ENCODE measurements at regions of chr3 and their contacts with region 1.

Region 1: DNA sequence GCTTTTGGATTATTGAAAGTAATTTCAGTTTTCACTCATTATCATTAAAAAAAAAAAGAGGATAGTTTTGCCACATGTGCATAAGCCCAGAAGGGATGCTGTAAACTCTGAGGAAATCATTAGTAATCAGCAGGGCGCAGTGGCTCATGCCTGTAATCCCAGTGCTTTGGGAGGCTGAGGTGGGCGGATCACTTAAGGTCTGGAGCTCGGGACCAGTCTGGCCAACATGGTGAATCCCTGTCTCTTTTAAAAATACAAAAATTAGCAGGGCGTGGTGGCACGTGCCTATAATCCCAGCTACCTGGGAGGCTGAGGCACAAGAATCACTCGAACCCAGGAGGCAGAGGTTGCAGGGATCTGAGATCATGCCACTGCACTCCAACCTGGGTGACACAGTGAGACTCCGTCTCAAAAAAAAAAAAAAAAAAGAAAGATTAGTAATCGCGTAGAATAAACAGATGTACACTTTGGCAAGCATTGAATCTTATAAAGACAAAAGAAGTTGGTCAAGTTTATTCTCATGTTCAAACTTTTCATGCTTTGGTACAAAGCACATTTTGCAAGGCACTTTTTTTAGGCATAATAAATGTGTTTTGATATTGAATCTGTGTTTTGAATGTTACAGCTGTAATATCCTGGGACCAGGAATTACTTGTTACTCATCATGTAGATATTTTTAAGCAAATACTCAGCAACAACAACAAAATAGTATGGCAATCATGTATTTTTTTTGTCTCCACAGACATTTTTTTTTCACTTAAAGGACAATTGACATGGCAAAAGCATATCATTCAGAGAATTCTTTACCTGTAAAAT is 93.2 kb upstream of the AGTR1 start:
- DNase-seq: no peak
- ATAC-seq: no peak
- H3K4me3 ChIP-seq: no peak overlapping the region
- H3K27ac ChIP-seq: peak overlapping the region; percentile 100
- H3K4me1 ChIP-seq: peaks cover 74% of the 10 kb centered on the region
- H3K27me3 ChIP-seq: no peaks in the 10 kb centered on the region
- CTCF ChIP-seq: no peak
- EP300 ChIP-seq: no peak
- POLR2A ChIP-seq: no peak
- RAD21 ChIP-seq: no peak

Region 2: GRCh38 chr3:148243609-148244008 is 360.9 kb before region 1 on chr3:
- CTCF ChIA-PET with region 1: no interaction called
- POLR2A ChIA-PET with region 1: no interaction called
- in situ Hi-C with region 1: no loop called
- intact Hi-C with region 1: no loop called
- DNase-seq: no peak
- ATAC-seq: no peak
- H3K4me3 ChIP-seq: no peak overlapping the region
- H3K27ac ChIP-seq: no peak overlapping the region
- H3K4me1 ChIP-seq: no peaks in the 10 kb centered on the region
- H3K27me3 ChIP-seq: no peaks in the 10 kb centered on the region
- CTCF ChIP-seq: no peak
- EP300 ChIP-seq: no peak
- POLR2A ChIP-seq: no peak
- RAD21 ChIP-seq: no peak

Region 3: DNA sequence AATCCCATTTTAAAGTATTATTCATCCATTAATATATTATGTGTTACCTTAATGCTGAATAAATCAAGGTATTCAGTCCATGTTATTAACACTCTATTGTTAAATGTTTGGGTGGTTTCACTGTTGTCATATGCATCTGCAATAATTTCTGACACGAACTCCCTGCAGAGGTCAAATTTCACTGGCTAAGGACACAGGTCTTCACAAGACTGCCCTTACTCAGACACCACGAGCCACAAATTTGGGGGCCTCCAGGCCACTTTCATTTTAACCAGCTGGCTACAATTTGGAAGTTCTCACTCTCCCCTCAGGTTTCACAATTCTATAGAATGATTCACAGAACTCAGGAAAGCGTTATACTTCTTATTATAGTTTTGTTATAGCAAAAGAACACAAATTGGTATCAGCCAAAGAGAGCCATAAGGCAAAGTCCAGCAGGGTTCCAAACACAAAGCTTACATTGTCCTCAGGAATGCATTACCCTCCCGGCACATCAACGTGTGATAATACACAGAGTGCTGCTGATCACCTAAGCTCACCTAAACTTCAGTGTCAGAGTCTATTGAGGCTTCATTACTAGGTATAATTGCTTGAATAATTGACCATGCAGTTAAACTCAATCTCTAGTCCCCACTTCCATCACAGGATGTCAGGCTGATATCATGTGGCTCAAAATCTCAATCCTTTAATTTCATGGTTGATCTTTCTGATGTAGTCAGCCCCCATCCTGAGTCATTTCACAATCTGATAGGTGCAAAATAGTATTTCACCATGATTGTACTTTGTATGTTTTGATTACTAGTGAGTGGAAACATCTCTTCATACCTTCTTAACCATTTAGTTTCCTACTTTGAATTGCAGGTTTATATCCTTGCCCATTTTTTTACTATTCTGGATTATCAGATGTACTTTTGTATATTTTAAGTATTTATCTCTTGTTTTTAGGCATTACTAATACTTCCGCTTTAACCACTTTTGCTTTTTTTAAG is 348.2 kb before region 1 on chr3:
- CTCF ChIA-PET with region 1: no interaction called
- POLR2A ChIA-PET with region 1: interaction called, 4 read pairs
- in situ Hi-C with region 1: no loop called
- intact Hi-C with region 1: loop called (anchors 5 kb)
- DNase-seq: peak; percentile 81
- ATAC-seq: peak; percentile 99
- H3K4me3 ChIP-seq: peak overlapping the region; percentile 9 to 24 (median 20); a peak in 4 of 6 replicates
- H3K27ac ChIP-seq: peak overlapping the region; percentile 64
- H3K4me1 ChIP-seq: peaks cover 55% of the 10 kb centered on the region
- H3K27me3 ChIP-seq: no peaks in the 10 kb centered on the region
- CTCF ChIP-seq: no peak
- EP300 ChIP-seq: no peak; a peak in 1 of 4 replicates
- POLR2A ChIP-seq: no peak
- RAD21 ChIP-seq: no peak

Region 4: GRCh38 chr3:148459931-148460513 is 144.5 kb before region 1 on chr3:
- CTCF ChIA-PET with region 1: no interaction called
- POLR2A ChIA-PET with region 1: no interaction called
- in situ Hi-C with region 1: no loop called
- intact Hi-C with region 1: loop called (anchors 10 kb)
- DNase-seq: no peak
- ATAC-seq: no peak
- H3K4me3 ChIP-seq: no peak overlapping the region
- H3K27ac ChIP-seq: no peak overlapping the region
- H3K4me1 ChIP-seq: peaks cover 28% of the 10 kb centered on the region
- H3K27me3 ChIP-seq: peaks cover 0 to 1% of the 10 kb centered on the region in 2 experiments; a peak in 1 of 5 replicates
- CTCF ChIP-seq: peak; percentile 49; the same call in 1 of the 2 replicates
- EP300 ChIP-seq: no peak
- POLR2A ChIP-seq: no peak
- RAD21 ChIP-seq: peak; percentile 48; the same call in 1 of the 2 replicates

Region 5: DNA sequence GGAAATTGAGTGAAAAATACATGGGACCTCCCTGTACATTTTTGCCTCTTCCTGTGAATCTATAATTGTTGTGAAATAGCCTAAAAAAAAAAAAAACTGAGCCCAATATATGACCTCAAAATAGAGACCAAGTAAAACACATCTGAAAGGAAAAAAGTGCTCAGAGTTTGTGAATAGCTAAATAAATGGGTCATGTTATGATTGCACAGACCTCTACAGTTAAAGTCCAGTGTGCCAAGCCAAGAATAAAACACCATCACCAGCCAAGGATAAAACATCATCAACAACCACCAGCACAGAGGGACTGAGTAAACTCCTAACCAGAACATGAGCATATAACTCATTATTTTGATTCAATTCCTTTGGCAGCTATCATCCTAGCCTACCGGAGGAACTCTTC is 22.4 kb before region 1 on chr3:
- CTCF ChIA-PET with region 1: no interaction called
- POLR2A ChIA-PET with region 1: interaction called, 15 read pairs
- in situ Hi-C with region 1: no loop called
- intact Hi-C with region 1: loop called (anchors 2 kb)
- DNase-seq: no peak
- ATAC-seq: no peak
- H3K4me3 ChIP-seq: no peak overlapping the region
- H3K27ac ChIP-seq: no peak overlapping the region
- H3K4me1 ChIP-seq: peaks cover 5% of the 10 kb centered on the region; the same call in 1 of the 2 replicates
- H3K27me3 ChIP-seq: no peaks in the 10 kb centered on the region
- CTCF ChIP-seq: no peak
- EP300 ChIP-seq: no peak
- POLR2A ChIP-seq: no peak
- RAD21 ChIP-seq: no peak

Region 6: DNA sequence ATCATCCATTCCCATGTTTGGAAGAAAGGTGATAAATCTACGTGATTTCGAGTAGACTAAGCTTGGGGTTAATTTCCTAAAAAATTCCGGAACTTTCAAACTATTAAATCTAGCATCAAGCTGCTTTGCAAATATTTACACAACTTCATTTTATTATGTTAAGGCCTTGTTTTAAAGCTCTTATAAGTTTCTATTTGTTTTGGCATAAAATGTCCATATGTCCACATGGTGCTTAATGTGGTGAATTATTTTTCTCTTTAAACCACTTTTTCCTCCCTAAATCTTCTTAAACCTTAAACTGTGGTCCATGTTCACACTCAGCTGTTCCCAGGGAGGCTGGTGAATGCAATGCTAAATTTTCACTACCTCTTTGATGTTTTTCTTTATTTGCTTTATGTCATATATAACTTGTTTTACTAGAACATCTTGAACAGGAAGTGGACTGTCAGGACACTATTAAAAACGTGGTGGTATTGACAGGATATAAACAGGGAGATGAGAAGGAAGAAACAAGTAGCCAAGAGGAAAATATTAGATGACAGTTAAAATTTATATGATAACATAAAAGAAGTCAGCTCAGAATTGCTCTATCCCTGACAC is 20.7 kb after region 1 on chr3:
- CTCF ChIA-PET with region 1: no interaction called
- POLR2A ChIA-PET with region 1: interaction called, 6 read pairs
- in situ Hi-C with region 1: no loop called
- intact Hi-C with region 1: loop called (anchors 1 kb)
- DNase-seq: peak; percentile 8
- ATAC-seq: no peak
- H3K4me3 ChIP-seq: no peak overlapping the region
- H3K27ac ChIP-seq: no peak overlapping the region
- H3K4me1 ChIP-seq: peaks cover 8% of the 10 kb centered on the region
- H3K27me3 ChIP-seq: no peaks in the 10 kb centered on the region
- CTCF ChIP-seq: no peak
- EP300 ChIP-seq: no peak; a peak in 1 of 4 replicates
- POLR2A ChIP-seq: no peak
- RAD21 ChIP-seq: no peak

Region 7: GRCh38 chr3:148707601-148708380 is 103.3 kb after region 1 on chr3:
- CTCF ChIA-PET with region 1: no interaction called
- POLR2A ChIA-PET with region 1: interaction called, 24 read pairs
- in situ Hi-C with region 1: no loop called
- intact Hi-C with region 1: loop called (anchors 2 kb)
- DNase-seq: no peak
- ATAC-seq: no peak
- H3K4me3 ChIP-seq: no peak overlapping the region
- H3K27ac ChIP-seq: no peak overlapping the region
- H3K4me1 ChIP-seq: peaks cover 50% of the 10 kb centered on the region
- H3K27me3 ChIP-seq: no peaks in the 10 kb centered on the region
- CTCF ChIP-seq: no peak
- EP300 ChIP-seq: no peak
- POLR2A ChIP-seq: no peak
- RAD21 ChIP-seq: no peak